ENCODE measurements at regions of chr2 and their contacts with region 1.

Region 1: GRCh38 chr2:196277002-196277401 is 105.6 kb upstream of the STK17B start:
- DNase-seq: peak; percentile 81
- H3K4me3 ChIP-seq: peak overlapping the region; percentile 56
- H3K27ac ChIP-seq: peak overlapping the region; percentile 100
- H3K4me1 ChIP-seq: peaks cover 49% of the 10 kb centered on the region
- CTCF ChIP-seq: peak; percentile 97

Region 2: GRCh38 chr2:195898505-195899191 is 378.4 kb before region 1 on chr2:
- CTCF ChIA-PET with region 1: no interaction called
- POLR2A ChIA-PET with region 1: interaction called, 13 read pairs
- intact Hi-C with region 1: no loop called
- DNase-seq: no peak
- H3K4me3 ChIP-seq: no peak overlapping the region
- H3K27ac ChIP-seq: no peak overlapping the region
- H3K4me1 ChIP-seq: no peaks in the 10 kb centered on the region
- CTCF ChIP-seq: no peak

Region 3: GRCh38 chr2:196182439-196183171 is 94.4 kb before region 1 on chr2:
- CTCF ChIA-PET with region 1: interaction called, 23 read pairs
- POLR2A ChIA-PET with region 1: interaction called, 226 read pairs
- intact Hi-C with region 1: no loop called
- DNase-seq: peak; percentile 60
- H3K4me3 ChIP-seq: peak overlapping the region; percentile 31
- H3K27ac ChIP-seq: peak overlapping the region; percentile 82
- H3K4me1 ChIP-seq: peaks cover 98% of the 10 kb centered on the region
- CTCF ChIP-seq: no peak

Region 4: GRCh38 chr2:196225213-196225612 is 51.8 kb before region 1 on chr2:
- CTCF ChIA-PET with region 1: no interaction called
- POLR2A ChIA-PET with region 1: interaction called, 13 read pairs
- intact Hi-C with region 1: no loop called
- DNase-seq: no peak
- H3K4me3 ChIP-seq: no peak overlapping the region
- H3K27ac ChIP-seq: no peak overlapping the region
- H3K4me1 ChIP-seq: peaks cover 23% of the 10 kb centered on the region
- CTCF ChIP-seq: no peak

Region 5: DNA sequence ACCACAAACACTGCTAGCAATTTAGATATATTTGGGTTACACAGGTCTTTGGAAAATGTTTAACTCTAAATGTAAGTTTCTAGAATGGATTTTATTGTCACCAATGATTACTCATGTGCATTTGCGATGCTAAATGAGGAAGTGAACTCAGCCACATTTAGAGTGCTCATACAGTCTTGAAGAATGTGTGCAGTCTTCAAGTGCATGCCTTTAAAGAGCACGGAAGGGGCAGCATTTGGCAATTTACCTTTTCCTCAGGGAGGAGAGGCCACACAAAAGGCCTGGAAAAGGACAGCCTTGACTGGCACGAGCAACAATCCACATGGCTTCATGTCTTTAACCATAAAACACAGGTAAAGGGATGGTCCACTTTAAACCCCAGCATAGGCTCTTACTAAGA is 27.1 kb before region 1 on chr2:
- CTCF ChIA-PET with region 1: interaction called, 5 read pairs
- POLR2A ChIA-PET with region 1: interaction called, 31 read pairs
- intact Hi-C with region 1: no loop called
- DNase-seq: peak; percentile 78
- H3K4me3 ChIP-seq: peak overlapping the region; percentile 0
- H3K27ac ChIP-seq: peak overlapping the region; percentile 19
- H3K4me1 ChIP-seq: peaks cover 49% of the 10 kb centered on the region
- CTCF ChIP-seq: 0 out of 2 replicates have a peak, but pooled peaks have one; percentile 20

Region 6: DNA sequence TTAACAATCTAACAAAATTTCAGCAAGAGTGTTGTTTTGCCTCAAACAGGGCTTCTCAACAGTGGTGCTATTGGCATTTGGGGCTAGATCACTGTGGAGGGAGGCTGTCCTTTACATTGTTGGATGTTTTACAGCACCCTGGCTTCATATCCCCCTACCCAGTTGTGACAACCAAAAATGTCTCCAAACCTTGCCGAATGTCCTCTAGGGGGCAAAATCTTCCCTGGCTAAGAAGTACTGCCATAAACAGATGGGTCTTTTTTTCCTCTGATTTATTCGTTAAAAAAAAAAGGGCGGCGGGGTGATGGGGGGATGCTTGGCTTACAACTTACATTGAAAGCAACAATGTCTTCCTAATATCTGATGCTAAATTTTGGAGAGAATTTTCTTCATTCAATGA is 155.0 kb after region 1 on chr2:
- CTCF ChIA-PET with region 1: no interaction called
- POLR2A ChIA-PET with region 1: no interaction called
- intact Hi-C with region 1: no loop called
- DNase-seq: peak; percentile 26
- H3K4me3 ChIP-seq: no peak overlapping the region
- H3K27ac ChIP-seq: no peak overlapping the region
- H3K4me1 ChIP-seq: no peaks in the 10 kb centered on the region
- CTCF ChIP-seq: peak; percentile 72

Measured in OCI-LY7 (cell line).